ENCODE measurements at regions of chr2 and their contacts with region 1.

Region 1: GRCh38 chr2:43484323-43484930 is 111.4 kb downstream of the THADA start:
- DNase-seq: no peak
- H3K4me3 ChIP-seq: no peak overlapping the region
- H3K27ac ChIP-seq: no peak overlapping the region
- H3K4me1 ChIP-seq: peaks cover 0 to 10% of the 10 kb centered on the region in 2 donors
- H3K27me3 ChIP-seq: no peaks in the 10 kb centered on the region
- CTCF ChIP-seq: peak in 2 of 3 donors; percentile 83 to 84
- POLR2A ChIP-seq: no peak

Region 2: DNA sequence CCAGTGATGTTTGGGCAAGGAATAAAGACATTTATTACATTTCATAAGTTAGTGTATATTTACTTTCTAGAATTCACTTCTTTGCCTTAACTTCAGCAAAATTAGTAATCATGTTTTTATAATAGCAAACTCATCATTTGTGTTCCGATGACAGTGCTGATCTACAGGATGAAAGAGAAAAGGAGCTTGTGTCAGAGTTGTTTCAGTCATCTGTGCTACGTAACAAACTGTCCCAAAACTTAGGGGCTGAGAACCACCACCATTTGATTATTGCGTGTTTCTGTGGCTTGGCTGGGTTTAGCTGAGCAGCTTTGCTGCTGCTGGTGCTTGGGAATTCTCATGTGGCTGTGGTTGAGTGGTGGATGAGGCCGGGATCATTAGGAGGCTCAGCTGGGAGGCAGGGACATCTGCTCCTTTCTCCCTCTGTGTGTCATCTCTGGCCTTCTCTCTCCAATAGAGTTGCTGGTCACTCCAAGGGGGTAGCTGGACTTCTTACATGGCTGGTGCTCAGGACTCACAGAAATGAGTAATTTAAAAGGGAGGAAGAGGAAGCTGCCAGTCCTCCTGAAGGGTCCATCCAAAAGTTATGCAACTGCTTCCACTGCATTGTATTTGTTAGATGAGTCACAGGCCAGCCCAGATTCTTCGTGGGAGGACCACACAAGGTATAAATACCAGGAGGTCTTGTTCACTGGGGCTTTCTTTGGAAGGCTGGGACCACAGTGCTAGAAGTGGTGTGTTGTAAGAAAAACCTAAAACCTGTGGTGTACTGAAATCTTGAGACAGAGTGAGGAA is 648.7 kb before region 1 on chr2:
- intact Hi-C with region 1: loop called (anchors 10 kb)
- DNase-seq: peak in 1 of 2 donors; percentile 76
- H3K4me3 ChIP-seq: no peak overlapping the region
- H3K27ac ChIP-seq: peak overlapping the region; percentile 68 to 77
- H3K4me1 ChIP-seq: no peaks in the 10 kb centered on the region
- H3K27me3 ChIP-seq: no peaks in the 10 kb centered on the region
- CTCF ChIP-seq: no peak
- POLR2A ChIP-seq: peak; percentile 28

Region 3: GRCh38 chr2:43585708-43586107 is 101.3 kb after region 1 on chr2:
- intact Hi-C with region 1: loop called (anchors 2 kb)
- DNase-seq: no peak
- H3K4me3 ChIP-seq: no peak overlapping the region
- H3K27ac ChIP-seq: no peak overlapping the region
- H3K4me1 ChIP-seq: no peaks in the 10 kb centered on the region
- H3K27me3 ChIP-seq: no peaks in the 10 kb centered on the region
- CTCF ChIP-seq: no peak
- POLR2A ChIP-seq: no peak

Measured in breast epithelium (tissue), 4 donors.